Heart left ventricle (tissue), 16 donors: ENCODE measurements at regions of chr18 and their contacts with region 1.

Region 1: GRCh38 chr18:49041435-49042245 is 90.9 kb upstream of the SMAD7 start:
- DNase-seq: peak in 4 of 5 donors; percentile 40 to 64 (median 52)
- ATAC-seq: peak; percentile 58 to 81 (median 72)
- H3K4me3 ChIP-seq: no peak overlapping the region
- H3K27ac ChIP-seq: no peak overlapping the region
- H3K4me1 ChIP-seq: peaks cover 0 to 11% (median 0%) of the 10 kb centered on the region in 12 donors
- H3K27me3 ChIP-seq: no peaks in the 10 kb centered on the region
- CTCF ChIP-seq: peak; percentile 45 to 70 (median 61)
- POLR2A ChIP-seq: no peak

Region 2: GRCh38 chr18:48762836-48763718 is 278.6 kb before region 1 on chr18:
- intact Hi-C with region 1: no loop called
- DNase-seq: no peak
- ATAC-seq: peak in 1 of 4 donors; percentile 3
- H3K4me3 ChIP-seq: no peak overlapping the region
- H3K27ac ChIP-seq: peak overlapping the region in 10 of 12 donors; percentile 26 to 65 (median 46)
- H3K4me1 ChIP-seq: peaks cover 0 to 71% (median 30%) of the 10 kb centered on the region in 12 donors
- H3K27me3 ChIP-seq: no peaks in the 10 kb centered on the region
- CTCF ChIP-seq: no peak
- POLR2A ChIP-seq: no peak

Region 3: GRCh38 chr18:49001111-49001510 is 40.5 kb before region 1 on chr18:
- intact Hi-C with region 1: loop called in 1 of 10 experiments (anchors 2 kb)
- DNase-seq: peak in 1 of 5 donors; percentile 13
- ATAC-seq: no peak
- H3K4me3 ChIP-seq: no peak overlapping the region
- H3K27ac ChIP-seq: no peak overlapping the region
- H3K4me1 ChIP-seq: peaks cover 0 to 26% (median 23%) of the 10 kb centered on the region in 12 donors
- H3K27me3 ChIP-seq: no peaks in the 10 kb centered on the region
- CTCF ChIP-seq: no peak
- POLR2A ChIP-seq: no peak

Region 4: DNA sequence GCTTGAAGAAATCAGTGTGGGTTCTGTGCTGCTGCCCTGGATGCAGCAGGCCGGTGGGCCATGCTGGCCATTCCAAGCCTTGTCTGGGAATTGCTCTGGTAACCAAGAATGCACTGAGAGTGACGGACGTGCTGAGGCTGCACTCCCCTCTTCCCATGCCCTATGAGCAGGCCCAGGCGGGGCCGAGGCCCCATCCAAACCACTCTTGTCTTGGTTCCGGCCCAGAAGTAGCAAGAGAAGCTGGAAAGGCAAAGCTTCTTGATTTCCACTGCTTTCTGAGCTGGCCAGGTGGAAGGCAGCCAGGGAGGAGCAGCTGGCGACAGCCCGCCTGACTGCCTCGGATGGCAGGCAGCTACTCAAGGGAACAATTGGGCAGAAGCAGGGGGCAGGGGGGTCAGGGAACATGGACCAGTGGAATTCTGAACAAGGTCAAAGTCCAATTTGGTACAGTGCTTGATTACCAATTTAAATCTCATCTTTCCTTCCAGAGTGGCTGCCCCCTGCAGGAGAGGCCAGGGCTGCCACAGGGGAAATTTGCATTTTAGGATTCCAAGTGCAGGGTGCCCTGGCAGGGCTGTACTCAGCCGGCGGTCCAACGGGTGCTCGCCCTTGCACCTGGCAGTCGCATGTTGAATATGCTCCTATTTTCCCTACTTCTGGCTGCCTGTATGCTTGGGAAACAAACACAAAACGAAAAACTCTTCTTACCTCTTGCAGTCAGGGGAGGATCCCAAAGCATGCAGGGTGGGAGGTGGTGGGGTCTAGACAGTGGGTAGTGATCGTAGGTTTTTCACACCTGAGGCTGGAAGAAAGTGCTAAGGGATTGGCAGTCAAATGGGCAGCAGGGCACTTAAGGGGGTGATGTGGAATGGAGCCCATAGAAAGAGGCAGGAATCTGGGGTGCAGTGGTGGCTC is 587.5 kb after region 1 on chr18:
- intact Hi-C with region 1: no loop called
- DNase-seq: peak in 3 of 5 donors; percentile 42 to 76 (median 45)
- ATAC-seq: peak in 2 of 4 donors; percentile 47 to 68
- H3K4me3 ChIP-seq: no peak overlapping the region
- H3K27ac ChIP-seq: no peak overlapping the region
- H3K4me1 ChIP-seq: peaks cover 0 to 5% (median 0%) of the 10 kb centered on the region in 12 donors
- H3K27me3 ChIP-seq: peaks cover 0 to 22% (median 0%) of the 10 kb centered on the region in 9 donors
- CTCF ChIP-seq: peak in 5 of 12 donors; percentile 8 to 30 (median 15)
- POLR2A ChIP-seq: no peak